Activated B cell treated with CpG ODN at 0.5 μM for 24 hours (primary cell): ENCODE measurements at regions of chr3 and their contacts with region 1.

Region 1: GRCh38 chr3:15405448-15406050 is 21.8 kb downstream of the METTL6 start:
- DNase-seq: no peak
- ATAC-seq: peak; percentile 73
- H3K4me3 Mint-ChIP-seq: no peak overlapping the region
- H3K27ac Mint-ChIP-seq: no peak overlapping the region
- H3K4me1 Mint-ChIP-seq: peaks cover 24% of the 10 kb centered on the region
- H3K27me3 Mint-ChIP-seq: no peaks in the 10 kb centered on the region
- CTCF ChIP-seq: peak; percentile 27

Region 2: DNA sequence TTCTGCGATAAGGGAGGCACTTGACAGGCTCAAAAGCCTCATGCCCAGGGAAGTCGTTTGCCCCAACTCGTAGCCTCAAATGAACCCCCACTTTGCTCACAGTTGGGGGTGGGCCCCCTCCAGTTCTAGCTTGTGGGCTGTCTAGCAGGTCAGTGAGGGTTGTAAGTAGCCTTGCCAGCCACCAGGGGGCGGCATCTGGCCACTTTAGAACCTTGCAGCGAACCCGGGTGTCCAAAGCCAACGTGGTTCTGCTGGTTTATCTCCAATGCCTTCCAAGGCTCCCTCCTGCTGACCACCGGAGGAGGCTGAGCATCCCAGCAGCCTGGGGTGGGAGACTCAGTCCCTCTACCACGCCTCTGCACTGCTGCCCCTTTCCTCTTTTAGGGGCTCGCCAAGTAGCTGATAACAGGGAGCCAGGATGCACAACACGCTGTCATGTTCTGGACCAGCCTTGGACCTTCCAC is 297.4 kb before region 1 on chr3:
- CTCF ChIA-PET with region 1: interaction called, 6 read pairs
- POLR2A ChIA-PET with region 1: no interaction called
- intact Hi-C with region 1: loop called (anchors 1 kb)
- DNase-seq: peak; percentile 66
- ATAC-seq: peak; percentile 98
- H3K4me3 Mint-ChIP-seq: no peak overlapping the region
- H3K27ac Mint-ChIP-seq: no peak overlapping the region
- H3K4me1 Mint-ChIP-seq: peaks cover 2% of the 10 kb centered on the region
- H3K27me3 Mint-ChIP-seq: peaks cover 7% of the 10 kb centered on the region
- CTCF ChIP-seq: peak; percentile 69

Region 3: GRCh38 chr3:15258720-15259119 is 146.8 kb before region 1 on chr3:
- CTCF ChIA-PET with region 1: interaction called, 156 read pairs
- POLR2A ChIA-PET with region 1: no interaction called
- intact Hi-C with region 1: no loop called
- DNase-seq: no peak
- ATAC-seq: no peak
- H3K4me3 Mint-ChIP-seq: no peak overlapping the region
- H3K27ac Mint-ChIP-seq: peak overlapping the region; percentile 30
- H3K4me1 Mint-ChIP-seq: peaks cover 5% of the 10 kb centered on the region
- H3K27me3 Mint-ChIP-seq: no peaks in the 10 kb centered on the region
- CTCF ChIP-seq: no peak

Region 4: DNA sequence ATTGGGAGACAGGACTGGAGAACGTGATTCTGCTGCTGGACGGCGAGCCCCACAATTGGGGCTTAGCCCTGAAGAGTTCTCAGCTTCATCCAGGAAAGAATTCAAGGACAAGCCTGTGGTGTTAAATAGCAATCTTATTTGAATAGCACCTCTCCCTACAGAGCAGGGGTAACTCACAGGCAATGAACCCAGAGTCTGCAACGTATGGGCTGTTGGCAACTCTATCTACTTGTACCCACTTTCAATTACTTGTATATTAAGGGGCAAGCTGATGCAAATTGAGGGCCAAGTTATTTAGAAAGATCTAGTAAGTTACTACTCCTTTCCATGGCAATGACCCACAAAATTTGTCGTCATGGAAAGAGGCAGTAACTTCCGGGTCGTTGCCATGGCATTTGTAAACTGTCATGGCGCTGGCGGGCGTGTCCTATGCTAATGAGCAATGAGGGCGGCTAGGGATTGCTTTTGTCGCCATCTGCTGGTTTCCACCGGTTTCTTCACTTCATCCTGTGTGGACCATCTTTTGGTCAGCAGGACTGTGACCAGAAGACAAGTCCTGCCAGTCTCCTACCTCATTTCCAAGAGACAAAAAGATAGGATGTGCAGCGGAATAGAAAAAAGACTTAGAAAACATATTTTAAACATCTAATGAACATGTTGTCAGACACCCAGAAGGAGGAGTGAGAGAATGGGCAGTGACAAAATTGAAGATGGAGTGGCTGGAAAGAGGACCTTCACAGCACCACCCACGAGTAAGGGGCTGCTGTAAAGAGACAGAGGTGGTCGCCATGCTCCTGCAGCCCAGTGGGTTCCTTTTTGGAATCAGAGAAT is 27.4 kb before region 1 on chr3:
- CTCF ChIA-PET with region 1: interaction called, 25 read pairs
- POLR2A ChIA-PET with region 1: interaction called, 4 read pairs
- intact Hi-C with region 1: loop called (anchors 1 kb)
- DNase-seq: peak; percentile 88
- ATAC-seq: peak; percentile 94
- H3K4me3 Mint-ChIP-seq: peak overlapping the region; percentile 44
- H3K27ac Mint-ChIP-seq: peak overlapping the region; percentile 91
- H3K4me1 Mint-ChIP-seq: peaks cover 29% of the 10 kb centered on the region
- H3K27me3 Mint-ChIP-seq: no peaks in the 10 kb centered on the region
- CTCF ChIP-seq: no peak

Region 5: GRCh38 chr3:15440891-15441290 is 35.3 kb after region 1 on chr3:
- CTCF ChIA-PET with region 1: no interaction called
- POLR2A ChIA-PET with region 1: no interaction called
- intact Hi-C with region 1: no loop called
- DNase-seq: no peak
- ATAC-seq: no peak
- H3K4me3 Mint-ChIP-seq: no peak overlapping the region
- H3K27ac Mint-ChIP-seq: no peak overlapping the region
- H3K4me1 Mint-ChIP-seq: no peaks in the 10 kb centered on the region
- H3K27me3 Mint-ChIP-seq: no peaks in the 10 kb centered on the region
- CTCF ChIP-seq: no peak

Region 6: GRCh38 chr3:15557511-15557946 is 152.0 kb after region 1 on chr3:
- CTCF ChIA-PET with region 1: interaction called, 8 read pairs
- POLR2A ChIA-PET with region 1: no interaction called
- intact Hi-C with region 1: loop called (anchors 1 kb)
- DNase-seq: peak; percentile 19
- ATAC-seq: peak; percentile 81
- H3K4me3 Mint-ChIP-seq: no peak overlapping the region
- H3K27ac Mint-ChIP-seq: no peak overlapping the region
- H3K4me1 Mint-ChIP-seq: peaks cover 29% of the 10 kb centered on the region
- H3K27me3 Mint-ChIP-seq: no peaks in the 10 kb centered on the region
- CTCF ChIP-seq: no peak